Naive thymus-derived CD4-positive, alpha-beta T cell (primary cell): ENCODE measurements at regions of chr22 and their contacts with region 1.

Region 1: DNA sequence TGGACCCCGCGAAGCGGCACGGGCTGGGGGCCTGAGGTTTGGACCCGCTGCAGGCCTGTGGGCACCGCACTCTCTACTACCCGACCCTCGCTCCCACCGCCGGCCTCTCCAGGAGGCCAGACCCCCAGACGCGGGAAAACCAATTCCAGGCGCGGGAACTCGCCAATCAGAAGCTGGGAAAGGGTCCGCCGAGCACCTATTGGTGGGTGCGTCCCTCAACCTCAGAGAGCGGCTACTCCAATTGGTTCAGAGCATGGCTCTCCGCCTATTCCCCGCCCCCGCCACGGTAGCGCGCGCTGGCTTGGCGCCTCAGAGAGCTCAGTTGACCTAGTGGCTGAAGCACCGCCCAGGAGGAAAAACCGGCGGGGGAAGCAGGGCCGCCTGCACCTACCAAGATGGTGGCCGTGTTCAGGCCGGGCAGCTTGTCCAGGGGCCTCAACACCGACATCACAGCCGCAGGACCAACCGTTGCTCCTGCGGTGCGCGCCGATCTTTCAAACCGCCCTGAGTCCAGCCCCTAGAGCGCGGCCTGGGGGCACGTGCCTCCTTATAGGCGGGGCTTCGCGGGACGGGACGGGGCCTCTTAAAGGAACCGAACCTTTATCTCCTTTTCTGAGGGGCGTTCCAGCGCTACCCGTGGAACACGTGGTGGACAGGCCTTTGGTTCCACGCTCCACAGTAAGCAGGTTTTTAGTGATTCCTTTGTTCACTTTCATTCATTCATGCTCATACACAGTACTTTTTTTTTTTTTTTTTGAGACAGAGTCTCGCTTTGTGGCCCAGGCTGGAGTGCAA is at the start of gene CENPM:
- DNase-seq: peak; percentile 71 to 94 (median 84)
- ATAC-seq: peak; percentile 97
- H3K4me3 ChIP-seq: peak within 1 kb of the TSS; percentile 82
- H3K4me3 Mint-ChIP-seq: peak within 1 kb of the TSS; percentile 83 to 93 (median 91)
- H3K27ac ChIP-seq: peak within 1 kb of the TSS; percentile 37
- H3K27ac Mint-ChIP-seq: peak within 1 kb of the TSS in 7 of 9 donors; percentile 63 to 93 (median 68)
- H3K4me1 ChIP-seq: peaks cover 3 to 13% of the 10 kb centered on the region in 2 donors
- H3K4me1 Mint-ChIP-seq: peaks cover 0 to 41% (median 10%) of the 10 kb centered on the region in 7 donors
- H3K27me3 ChIP-seq: no peaks in the 10 kb centered on the region
- H3K27me3 Mint-ChIP-seq: no peaks in the 10 kb centered on the region
- total RNA-seq, gene CENPM: 5.1 to 51.1 (median 10.8) TPM

Region 2: DNA sequence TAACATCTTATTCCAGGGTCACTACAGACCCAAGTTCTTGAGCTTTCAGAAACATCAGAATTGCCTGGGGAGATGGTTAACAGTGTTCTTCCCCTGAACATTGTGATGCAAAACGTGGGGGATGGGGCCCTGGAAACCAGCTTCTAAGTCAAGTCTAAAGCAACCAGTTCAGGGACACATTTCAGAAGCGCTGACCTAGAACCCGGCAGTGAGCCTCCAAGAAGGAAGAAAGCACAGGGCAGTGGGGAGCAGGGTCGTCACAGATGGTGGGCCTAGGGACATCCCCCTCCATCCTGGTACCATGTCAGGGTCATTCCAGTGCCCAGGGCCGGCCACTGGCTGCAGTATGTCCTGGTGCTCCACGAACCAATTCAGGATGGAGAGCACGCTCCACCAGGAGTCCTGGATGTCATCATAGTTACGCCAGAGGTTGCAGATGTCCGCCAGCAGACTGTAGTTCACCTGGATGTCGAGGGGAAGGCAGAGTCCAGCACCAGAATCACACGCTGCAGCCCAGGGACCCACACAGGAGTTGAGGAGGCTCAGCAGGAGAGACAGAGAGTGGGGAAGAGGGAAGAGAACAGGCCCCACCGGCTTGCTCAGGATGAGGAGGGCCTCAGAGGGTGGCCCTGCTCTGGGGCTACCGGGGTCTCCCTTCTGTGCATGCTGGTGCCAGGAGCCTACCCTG is 118.8 kb after region 1 on chr22:
- CTCF ChIA-PET with region 1: no interaction called
- POLR2A ChIA-PET with region 1: no interaction called
- intact Hi-C with region 1: no loop called
- DNase-seq: peak in 1 of 9 donors; percentile 18
- ATAC-seq: no peak
- H3K4me3 ChIP-seq: no peak overlapping the region
- H3K4me3 Mint-ChIP-seq: no peak overlapping the region
- H3K27ac ChIP-seq: no peak overlapping the region
- H3K27ac Mint-ChIP-seq: peak overlapping the region in 1 of 9 donors; percentile 69
- H3K4me1 ChIP-seq: peaks cover 8 to 9% of the 10 kb centered on the region in 2 donors
- H3K4me1 Mint-ChIP-seq: peaks cover under 1 to 26% (median 10%) of the 10 kb centered on the region in 7 donors
- H3K27me3 ChIP-seq: no peaks in the 10 kb centered on the region
- H3K27me3 Mint-ChIP-seq: no peaks in the 10 kb centered on the region

Region 3: DNA sequence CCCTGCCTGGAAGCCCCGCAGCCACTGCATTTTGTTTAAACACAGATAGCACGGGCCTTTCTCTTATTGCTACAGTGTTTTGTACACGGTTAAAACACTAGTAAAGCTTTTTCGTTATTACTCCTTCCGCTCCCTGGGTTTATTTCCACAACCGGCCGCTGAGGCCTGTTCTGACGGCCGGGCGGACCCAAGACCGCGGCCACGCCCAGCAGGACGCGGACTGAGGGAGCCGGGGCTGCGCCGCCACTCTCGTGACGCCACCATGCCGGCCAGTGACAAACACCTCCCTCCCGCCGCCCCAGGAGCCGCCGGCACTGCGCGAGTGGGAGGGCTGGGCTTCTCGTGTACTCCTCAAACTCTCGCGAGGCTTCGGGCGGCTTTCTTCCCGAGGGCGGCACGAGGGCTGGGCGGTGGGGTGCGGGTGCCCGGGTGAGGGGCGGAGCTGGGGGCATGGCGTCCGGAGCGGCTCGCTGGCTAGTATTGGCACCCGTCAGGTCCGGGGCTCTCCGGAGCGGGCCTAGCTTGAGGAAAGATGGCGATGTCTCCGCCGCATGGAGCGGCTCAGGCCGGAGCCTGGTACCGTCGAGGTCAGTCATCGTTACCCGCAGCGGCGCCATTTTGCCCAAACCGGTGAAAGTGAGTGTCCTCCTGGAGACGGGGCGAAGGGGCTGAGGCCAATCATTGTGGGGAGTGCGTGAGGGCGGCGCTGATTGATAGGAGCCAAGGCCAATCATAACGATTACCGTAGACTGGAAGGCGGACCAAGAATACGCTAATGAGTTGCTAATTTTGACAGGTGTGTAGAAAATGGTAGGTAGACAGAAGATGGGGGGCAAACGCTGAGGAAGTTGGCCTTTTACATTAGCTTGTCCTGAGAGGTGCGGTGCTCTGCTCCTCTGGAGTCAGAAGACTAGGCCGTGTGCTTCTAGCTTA is 132.8 kb after region 1 on chr22 and contains the start of gene SMDT1:
- CTCF ChIA-PET with region 1: no interaction called
- POLR2A ChIA-PET with region 1: no interaction called
- intact Hi-C with region 1: loop called in 1 of 2 experiments (anchors 2 kb)
- DNase-seq: peak; percentile 96 to 100 (median 99)
- ATAC-seq: peak; percentile 94
- H3K4me3 ChIP-seq: peak within 1 kb of the TSS; percentile 98
- H3K4me3 Mint-ChIP-seq: peak within 1 kb of the TSS; percentile 94 to 99 (median 96)
- H3K27ac ChIP-seq: peak within 1 kb of the TSS; percentile 97
- H3K27ac Mint-ChIP-seq: peak within 1 kb of the TSS; percentile 96 to 99 (median 99)
- H3K4me1 ChIP-seq: peaks cover 10 to 16% of the 10 kb centered on the region in 2 donors
- H3K4me1 Mint-ChIP-seq: peaks cover 9 to 52% (median 43%) of the 10 kb centered on the region in 7 donors
- H3K27me3 ChIP-seq: no peaks in the 10 kb centered on the region
- H3K27me3 Mint-ChIP-seq: no peaks in the 10 kb centered on the region
- total RNA-seq, gene SMDT1: 40.4 to 105 (median 98.8) TPM

Region 4: DNA sequence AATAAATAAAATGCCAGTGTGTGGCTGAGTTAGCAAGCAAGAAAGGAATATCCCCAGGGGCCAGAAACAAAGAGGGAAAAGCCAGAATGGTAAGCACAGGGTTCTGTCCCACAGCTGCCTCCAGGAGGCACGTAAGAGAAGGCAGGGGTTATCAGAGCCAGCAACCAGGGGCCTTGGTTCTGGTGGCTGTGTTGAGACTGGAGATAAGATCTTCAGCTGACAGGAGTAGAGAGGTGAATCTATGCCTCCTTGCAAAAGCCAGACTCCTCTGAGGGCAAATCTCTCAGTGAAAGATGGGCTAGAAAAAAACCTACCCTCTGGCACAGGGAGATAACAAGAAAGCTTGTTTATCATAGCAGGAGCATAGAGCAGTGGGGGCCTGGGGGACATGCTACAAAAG is 515.2 kb after region 1 on chr22:
- CTCF ChIA-PET with region 1: no interaction called
- POLR2A ChIA-PET with region 1: no interaction called
- intact Hi-C with region 1: no loop called
- DNase-seq: no peak
- ATAC-seq: no peak
- H3K4me3 ChIP-seq: no peak overlapping the region
- H3K4me3 Mint-ChIP-seq: no peak overlapping the region
- H3K27ac ChIP-seq: no peak overlapping the region
- H3K27ac Mint-ChIP-seq: no peak overlapping the region
- H3K4me1 ChIP-seq: no peaks in the 10 kb centered on the region
- H3K4me1 Mint-ChIP-seq: peaks cover 0 to 6% (median 0%) of the 10 kb centered on the region in 7 donors
- H3K27me3 ChIP-seq: no peaks in the 10 kb centered on the region
- H3K27me3 Mint-ChIP-seq: peaks cover 11 to 37% (median 14%) of the 10 kb centered on the region in 5 donors